Activated CD8-positive, alpha-beta T cell treated with anti-CD3 and anti-CD28 coated beads for 36 hours (primary cell): ENCODE measurements at regions of chrX and their contacts with region 1.

Region 1: GRCh38 chrX:110135618-110136017 is 132.7 kb downstream of the TMEM164 start:
- DNase-seq: no peak
- ATAC-seq: no peak
- H3K4me3 Mint-ChIP-seq: no peak overlapping the region
- H3K27ac Mint-ChIP-seq: no peak overlapping the region
- H3K4me1 Mint-ChIP-seq: peaks cover 10% of the 10 kb centered on the region
- H3K27me3 Mint-ChIP-seq: no peaks in the 10 kb centered on the region
- CTCF ChIP-seq: no peak

Region 2: DNA sequence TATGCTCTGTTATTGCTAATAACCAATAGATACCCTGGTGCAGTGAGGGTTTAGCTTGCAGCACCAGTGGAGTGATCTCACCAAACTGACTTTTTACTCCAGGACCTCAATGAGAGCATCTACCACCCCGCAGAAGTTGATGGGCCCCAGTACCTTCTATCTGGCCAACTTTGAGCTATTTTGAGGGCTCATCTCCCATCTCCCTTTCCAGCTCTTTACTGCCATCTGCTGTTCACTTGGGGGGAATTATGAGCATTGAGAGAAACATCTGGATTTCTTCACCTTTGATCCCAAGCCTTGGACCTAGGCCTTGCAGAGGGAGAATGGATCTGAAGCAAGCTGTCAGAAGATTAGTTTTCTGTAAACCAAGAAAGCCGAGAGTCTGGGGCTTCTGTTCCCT is 10.9 kb after region 1 on chrX:
- CTCF ChIA-PET with region 1: interaction called, 15 read pairs
- POLR2A ChIA-PET with region 1: no interaction called
- intact Hi-C with region 1: no loop called
- DNase-seq: peak; percentile 23
- ATAC-seq: peak; percentile 76
- H3K4me3 Mint-ChIP-seq: no peak overlapping the region
- H3K27ac Mint-ChIP-seq: no peak overlapping the region
- H3K4me1 Mint-ChIP-seq: peaks cover 3% of the 10 kb centered on the region
- H3K27me3 Mint-ChIP-seq: no peaks in the 10 kb centered on the region
- CTCF ChIP-seq: no peak